ENCODE measurements at regions of chr20 and their contacts with region 1.

Region 1: GRCh38 chr20:23361598-23362384 is at the start of gene GZF1:
- DNase-seq: peak; percentile 99
- H3K4me3 ChIP-seq: peak within 1 kb of the TSS; percentile 80 to 91 (median 83)
- H3K27ac ChIP-seq: peak within 1 kb of the TSS; percentile 98 to 100 (median 99)
- H3K4me1 ChIP-seq: peaks cover 15 to 61% (median 45%) of the 10 kb centered on the region in 4 donors
- H3K27me3 ChIP-seq: no peaks in the 10 kb centered on the region
- CTCF ChIP-seq: peak in 2 of 5 experiments; percentile 22 to 58
- EP300 ChIP-seq: peak; percentile 74
- POLR2A ChIP-seq: peak; percentile 99
- total RNA-seq, gene GZF1: 4.9 to 23.3 (median 13.3) TPM

Region 2: GRCh38 chr20:21867353-21867752 is 1494.4 kb before region 1 on chr20:
- in situ Hi-C with region 1: no loop called
- intact Hi-C with region 1: loop called (anchors 5 kb)
- DNase-seq: no peak
- H3K4me3 ChIP-seq: no peak overlapping the region
- H3K27ac ChIP-seq: no peak overlapping the region
- H3K4me1 ChIP-seq: no peaks in the 10 kb centered on the region
- H3K27me3 ChIP-seq: no peaks in the 10 kb centered on the region
- CTCF ChIP-seq: no peak
- EP300 ChIP-seq: no peak
- POLR2A ChIP-seq: no peak

Region 3: DNA sequence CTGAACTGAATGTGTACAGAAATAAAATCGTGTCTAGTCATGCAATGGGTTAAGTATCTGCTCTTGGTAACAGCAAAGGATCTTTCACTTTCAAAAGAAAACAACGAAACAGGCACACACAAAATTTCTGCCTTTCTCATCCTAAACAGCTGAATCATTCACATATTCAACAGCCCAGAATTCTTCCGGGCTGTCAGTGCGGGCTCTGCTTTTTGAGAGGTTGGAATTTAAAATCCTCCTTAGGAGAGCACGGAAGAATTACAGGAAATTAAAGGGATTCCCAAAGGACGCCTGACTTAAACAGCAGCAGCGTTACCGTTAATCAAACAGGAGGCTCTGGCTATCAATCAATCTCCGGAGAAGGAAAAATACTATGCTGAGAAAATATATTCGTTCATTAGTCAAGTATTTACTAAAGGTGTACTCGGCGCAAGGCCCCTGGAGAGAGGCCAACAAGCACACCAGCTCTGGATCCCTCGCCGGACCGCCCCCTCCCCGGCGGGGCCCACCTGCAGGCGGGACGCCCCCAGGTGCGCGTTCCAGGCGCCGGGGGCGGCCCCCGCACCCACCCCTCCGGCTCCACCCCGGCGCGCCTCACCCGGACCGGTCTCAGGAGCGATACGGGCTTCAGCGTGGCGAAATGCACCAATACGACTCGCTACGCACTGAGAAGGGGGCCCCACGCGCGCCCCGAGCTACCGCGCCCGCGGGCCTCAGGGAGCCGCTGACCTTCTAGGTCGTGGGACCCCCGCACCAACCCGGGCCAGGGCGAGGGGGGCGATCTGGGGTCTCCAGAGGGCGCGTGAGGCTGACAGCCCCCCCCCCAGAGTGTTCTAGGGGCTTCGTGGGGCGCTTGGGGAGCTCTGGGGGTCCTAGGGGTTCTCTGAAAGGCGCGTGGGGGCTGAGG is 58.5 kb after region 1 on chr20:
- in situ Hi-C with region 1: no loop called
- intact Hi-C with region 1: loop called (anchors 10 kb)
- DNase-seq: peak; percentile 57
- H3K4me3 ChIP-seq: peak overlapping the region; percentile 92 to 100 (median 94)
- H3K27ac ChIP-seq: peak overlapping the region; percentile 82 to 93 (median 90)
- H3K4me1 ChIP-seq: peaks cover 0 to 48% (median 10%) of the 10 kb centered on the region in 4 donors
- H3K27me3 ChIP-seq: no peaks in the 10 kb centered on the region
- CTCF ChIP-seq: no peak
- EP300 ChIP-seq: no peak
- POLR2A ChIP-seq: no peak

Region 4: GRCh38 chr20:23508449-23509229 is 146.8 kb after region 1 on chr20:
- in situ Hi-C with region 1: no loop called
- intact Hi-C with region 1: no loop called
- DNase-seq: no peak
- H3K4me3 ChIP-seq: no peak overlapping the region
- H3K27ac ChIP-seq: no peak overlapping the region
- H3K4me1 ChIP-seq: no peaks in the 10 kb centered on the region
- H3K27me3 ChIP-seq: no peaks in the 10 kb centered on the region
- CTCF ChIP-seq: no peak
- EP300 ChIP-seq: no peak
- POLR2A ChIP-seq: no peak

Region 5: GRCh38 chr20:24277196-24277595 is 915.4 kb after region 1 on chr20:
- in situ Hi-C with region 1: no loop called
- intact Hi-C with region 1: loop called (anchors 5 kb)
- DNase-seq: no peak
- H3K4me3 ChIP-seq: no peak overlapping the region
- H3K27ac ChIP-seq: no peak overlapping the region
- H3K4me1 ChIP-seq: no peaks in the 10 kb centered on the region
- H3K27me3 ChIP-seq: no peaks in the 10 kb centered on the region
- CTCF ChIP-seq: no peak
- EP300 ChIP-seq: no peak
- POLR2A ChIP-seq: no peak

Measured in transverse colon (tissue), 4 donors.